ENCODE measurements at regions of chr18 and their contacts with region 1.

Region 1: GRCh38 chr18:54679318-54680149 is 88.5 kb downstream of the DYNAP start:
- DNase-seq: no peak
- H3K4me3 ChIP-seq: no peak overlapping the region
- H3K27ac ChIP-seq: no peak overlapping the region
- H3K4me1 ChIP-seq: no peaks in the 10 kb centered on the region
- H3K27me3 ChIP-seq: no peaks in the 10 kb centered on the region
- CTCF ChIP-seq: peak in 3 of 6 experiments; percentile 37 to 40 (median 39)
- POLR2A ChIP-seq: no peak

Region 2: GRCh38 chr18:54415086-54415485 is 264.4 kb before region 1 on chr18:
- intact Hi-C with region 1: no loop called
- DNase-seq: no peak
- H3K4me3 ChIP-seq: no peak overlapping the region
- H3K27ac ChIP-seq: no peak overlapping the region
- H3K4me1 ChIP-seq: no peaks in the 10 kb centered on the region
- H3K27me3 ChIP-seq: no peaks in the 10 kb centered on the region
- CTCF ChIP-seq: no peak
- POLR2A ChIP-seq: no peak

Region 3: GRCh38 chr18:54444319-54444914 is 235.1 kb before region 1 on chr18:
- intact Hi-C with region 1: loop called (anchors 10 kb)
- DNase-seq: peak; percentile 30 to 44
- H3K4me3 ChIP-seq: no peak overlapping the region
- H3K27ac ChIP-seq: no peak overlapping the region
- H3K4me1 ChIP-seq: no peaks in the 10 kb centered on the region
- H3K27me3 ChIP-seq: no peaks in the 10 kb centered on the region
- CTCF ChIP-seq: peak in 5 of 6 experiments; percentile 19 to 65 (median 51)
- POLR2A ChIP-seq: no peak

Region 4: GRCh38 chr18:54983041-54983686 is 303.6 kb after region 1 on chr18:
- intact Hi-C with region 1: loop called (anchors 10 kb)
- DNase-seq: no peak
- H3K4me3 ChIP-seq: no peak overlapping the region
- H3K27ac ChIP-seq: no peak overlapping the region
- H3K4me1 ChIP-seq: no peaks in the 10 kb centered on the region
- H3K27me3 ChIP-seq: no peaks in the 10 kb centered on the region
- CTCF ChIP-seq: peak in 5 of 6 experiments; percentile 33 to 64 (median 57)
- POLR2A ChIP-seq: no peak